Right lobe of liver (tissue), 6 donors: ENCODE measurements at regions of chr9 and their contacts with region 1.

Region 1: GRCh38 chr9:4630836-4631235 is 31.3 kb upstream of the PLPP6 start:
- DNase-seq: no peak
- ATAC-seq: no peak
- H3K4me3 ChIP-seq: no peak overlapping the region
- H3K27ac ChIP-seq: no peak overlapping the region
- H3K4me1 ChIP-seq: no peaks in the 10 kb centered on the region
- H3K27me3 ChIP-seq: no peaks in the 10 kb centered on the region
- CTCF ChIP-seq: no peak
- POLR2A ChIP-seq: no peak

Region 2: DNA sequence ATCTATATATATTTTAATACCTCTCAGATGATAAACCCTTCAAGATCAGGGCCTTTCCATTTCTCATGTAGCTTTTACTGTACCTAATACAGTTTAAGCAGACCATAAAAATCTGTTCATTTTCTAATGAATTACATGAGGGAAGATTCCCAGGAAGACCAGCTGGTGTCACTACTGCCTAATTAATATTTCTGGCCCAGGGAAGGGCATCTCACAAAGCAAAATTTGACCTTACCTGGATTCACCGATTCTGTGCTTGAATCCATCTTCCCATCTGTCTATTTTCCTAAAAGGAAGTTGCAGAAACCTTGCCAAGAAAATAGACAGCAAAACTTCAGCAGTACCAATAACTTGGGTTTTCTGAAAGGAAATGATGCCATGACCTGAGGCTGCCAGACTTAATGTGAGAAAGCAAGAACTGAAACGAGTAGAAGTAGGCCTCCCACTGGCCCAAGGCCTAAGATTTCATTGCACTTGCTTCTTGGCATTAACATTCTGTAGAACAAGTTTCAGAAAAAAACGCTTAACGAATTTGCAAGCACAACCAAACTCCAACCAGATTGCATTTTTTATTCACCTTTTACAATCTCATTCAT is 248.0 kb before region 1 on chr9:
- intact Hi-C with region 1: loop called in 1 of 2 experiments (anchors 10 kb)
- DNase-seq: no peak
- ATAC-seq: peak; percentile 74 to 84 (median 76)
- H3K4me3 ChIP-seq: no peak overlapping the region
- H3K27ac ChIP-seq: no peak overlapping the region
- H3K4me1 ChIP-seq: peaks cover 0 to 7% (median 0%) of the 10 kb centered on the region in 4 donors
- H3K27me3 ChIP-seq: no peaks in the 10 kb centered on the region
- CTCF ChIP-seq: peak; percentile 55 to 67 (median 60)
- POLR2A ChIP-seq: no peak

Region 3: GRCh38 chr9:4475301-4475700 is 155.5 kb before region 1 on chr9:
- intact Hi-C with region 1: no loop called
- DNase-seq: no peak
- ATAC-seq: no peak
- H3K4me3 ChIP-seq: no peak overlapping the region
- H3K27ac ChIP-seq: no peak overlapping the region
- H3K4me1 ChIP-seq: no peaks in the 10 kb centered on the region
- H3K27me3 ChIP-seq: no peaks in the 10 kb centered on the region
- CTCF ChIP-seq: no peak
- POLR2A ChIP-seq: no peak